Activated naive CD8-positive, alpha-beta T cell treated with anti-CD3 and anti-CD28 coated beads, Interleukin-2, amount 10 ng/mL, durations not matched to agents 7 days and 5 days (primary cell): ENCODE measurements at regions of chr2 and their contacts with region 1.

Region 1: DNA sequence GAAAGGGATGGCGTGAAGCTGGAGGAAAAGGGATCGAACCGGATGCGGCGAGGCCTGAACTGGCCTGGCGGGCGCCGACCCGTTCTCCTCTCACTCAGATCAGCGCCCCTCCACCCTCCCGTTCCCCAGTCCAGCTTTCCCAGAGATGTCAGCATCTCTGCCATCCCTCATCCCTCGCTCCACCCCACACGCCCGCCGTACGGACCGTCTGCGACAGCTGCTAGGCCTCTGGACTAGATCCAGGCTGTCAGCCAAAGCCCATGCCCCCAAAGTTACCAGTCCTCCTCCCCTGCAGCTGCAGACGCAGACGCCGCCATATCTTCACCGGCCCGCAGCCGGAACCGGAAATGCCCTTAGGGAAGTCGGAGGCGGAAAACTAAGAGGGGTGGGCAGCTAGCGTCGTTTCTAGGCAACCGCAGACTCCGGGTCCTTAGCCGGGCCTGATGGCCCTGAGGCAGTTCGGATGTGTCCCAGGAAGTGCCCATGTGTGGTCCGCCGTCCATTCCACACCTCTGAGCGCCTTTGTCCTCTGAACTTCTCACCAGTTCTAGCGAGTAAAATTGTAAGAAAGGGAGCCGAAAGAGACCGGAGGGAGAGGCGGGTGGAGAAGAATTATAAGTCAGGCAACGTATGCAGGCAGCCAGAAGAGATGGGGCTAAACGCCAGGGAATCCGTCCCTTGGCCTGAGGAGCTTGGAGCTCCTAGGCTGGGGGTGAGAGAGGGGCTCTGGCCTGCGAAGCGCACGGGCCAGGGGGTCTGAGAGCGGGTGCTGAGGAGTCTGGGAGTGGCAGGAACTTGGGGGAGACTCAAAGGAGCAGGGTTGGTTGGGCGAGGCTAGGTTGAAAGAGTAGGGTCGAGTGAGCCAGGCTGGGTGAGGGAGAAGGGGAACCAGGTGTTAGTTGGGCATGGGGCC is at the starts of genes RNF25 and STK36:
- DNase-seq: peak; percentile 79
- ATAC-seq: peak; percentile 93
- H3K4me3 Mint-ChIP-seq: peak within 1 kb of the TSS; percentile 97
- H3K27ac Mint-ChIP-seq: peak within 1 kb of the TSS; percentile 91
- H3K4me1 Mint-ChIP-seq: peaks cover 15% of the 10 kb centered on the region
- H3K27me3 Mint-ChIP-seq: no peaks in the 10 kb centered on the region
- total RNA-seq, gene RNF25: 21.9 to 30.9 TPM
- total RNA-seq, gene STK36: 19.9 to 20.1 TPM

Region 2: GRCh38 chr2:218659258-218659987 is 12.5 kb before region 1 on chr2 and contains the starts of genes BCS1L and ZNF142:
- POLR2A ChIA-PET with region 1: interaction called, 53 read pairs
- DNase-seq: peak; percentile 91
- ATAC-seq: peak; percentile 94
- H3K4me3 Mint-ChIP-seq: peak within 1 kb of the TSS; percentile 98
- H3K27ac Mint-ChIP-seq: peak within 1 kb of the TSS; percentile 96
- H3K4me1 Mint-ChIP-seq: peaks cover 28% of the 10 kb centered on the region
- H3K27me3 Mint-ChIP-seq: no peaks in the 10 kb centered on the region
- total RNA-seq, gene BCS1L: 46.7 to 49.3 TPM
- total RNA-seq, gene ZNF142: 48.6 TPM